ENCODE measurements at regions of chr12 and their contacts with region 1.

Region 1: GRCh38 chr12:121144416-121144914 is 11.8 kb downstream of the P2RX7 start:
- DNase-seq: peak; percentile 33
- ATAC-seq: peak; percentile 74
- H3K4me3 Mint-ChIP-seq: no peak overlapping the region
- H3K27ac Mint-ChIP-seq: peak overlapping the region; percentile 72
- H3K4me1 Mint-ChIP-seq: peaks cover 25% of the 10 kb centered on the region
- H3K27me3 Mint-ChIP-seq: no peaks in the 10 kb centered on the region

Region 2: DNA sequence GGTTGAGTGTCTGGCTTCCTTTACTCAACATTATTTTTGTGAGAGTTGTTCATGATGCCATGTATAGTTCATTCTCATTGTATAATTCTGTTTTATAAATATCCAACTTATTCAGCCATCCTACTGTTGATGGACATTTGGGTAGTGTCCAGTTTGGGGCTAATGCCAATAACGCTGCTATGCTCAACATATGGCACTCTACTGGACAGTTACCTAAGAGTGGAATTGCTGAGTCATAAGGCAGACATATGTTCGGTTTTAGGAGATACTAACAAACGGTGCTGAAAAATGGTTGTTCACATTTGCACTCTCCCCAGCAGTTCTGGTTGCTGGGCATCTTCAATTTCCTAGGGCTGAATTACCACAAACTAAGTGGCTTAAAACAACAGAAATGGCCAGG is 36.7 kb after region 1 on chr12:
- CTCF ChIA-PET with region 1: no interaction called
- POLR2A ChIA-PET with region 1: no interaction called
- intact Hi-C with region 1: loop called in 1 of 2 experiments (anchors 5 kb)
- DNase-seq: no peak
- ATAC-seq: no peak
- H3K4me3 Mint-ChIP-seq: no peak overlapping the region
- H3K27ac Mint-ChIP-seq: no peak overlapping the region
- H3K4me1 Mint-ChIP-seq: peaks cover 5% of the 10 kb centered on the region
- H3K27me3 Mint-ChIP-seq: no peaks in the 10 kb centered on the region

Region 3: DNA sequence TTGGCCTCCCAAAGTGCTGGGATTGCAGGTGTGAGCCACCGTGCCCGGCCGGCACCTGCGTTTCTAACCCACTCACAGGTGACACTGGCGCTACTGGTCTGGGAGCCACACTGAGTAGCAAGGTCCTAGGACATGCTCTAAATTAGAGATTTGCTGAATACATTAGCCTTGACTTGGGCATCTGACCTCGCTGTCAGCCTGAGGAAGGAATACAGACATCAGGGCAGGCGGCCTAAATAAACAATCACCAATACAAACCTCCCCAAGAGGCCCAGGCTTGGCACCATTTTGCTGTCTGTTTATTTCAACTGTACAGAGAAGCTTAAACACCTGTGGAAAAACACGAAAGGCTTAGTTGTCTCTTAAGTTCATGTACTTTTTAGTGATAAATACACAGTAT is 93.0 kb after region 1 on chr12:
- CTCF ChIA-PET with region 1: no interaction called
- POLR2A ChIA-PET with region 1: no interaction called
- intact Hi-C with region 1: no loop called
- DNase-seq: no peak
- ATAC-seq: no peak
- H3K4me3 Mint-ChIP-seq: no peak overlapping the region
- H3K27ac Mint-ChIP-seq: no peak overlapping the region
- H3K4me1 Mint-ChIP-seq: peaks cover 33% of the 10 kb centered on the region
- H3K27me3 Mint-ChIP-seq: no peaks in the 10 kb centered on the region

Measured in activated CD4-positive, alpha-beta T cell treated with anti-CD3 and anti-CD28 coated beads for 36 hours (primary cell).